MCF 10A (cell line): ENCODE measurements at regions of chr5 and their contacts with region 1.

Region 1: DNA sequence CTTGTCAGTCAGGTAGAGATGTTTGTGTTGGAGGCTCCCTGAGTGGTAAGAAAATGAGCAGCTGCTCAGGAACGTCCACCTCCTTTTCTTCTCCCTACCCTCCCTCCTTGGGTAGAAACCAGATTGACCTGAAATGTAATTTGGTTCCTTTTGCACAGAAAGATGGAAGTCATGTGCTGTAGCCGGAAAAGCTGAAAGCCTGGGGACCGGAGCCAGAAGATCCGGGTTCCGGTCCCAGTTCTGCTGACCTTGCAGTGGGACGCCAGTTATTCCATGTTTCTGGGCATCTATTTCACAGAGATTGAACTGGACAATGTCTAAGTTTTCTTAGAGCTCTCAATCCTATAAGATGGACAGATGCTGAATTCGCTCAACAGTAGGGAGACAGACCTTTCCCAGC is 40.1 kb downstream of the SLC36A1 start:
- DNase-seq: no peak
- H3K4me3 Mint-ChIP-seq: no peak overlapping the region
- H3K27ac Mint-ChIP-seq: peak overlapping the region; percentile 6
- H3K4me1 Mint-ChIP-seq: no peaks in the 10 kb centered on the region
- H3K27me3 Mint-ChIP-seq: no peaks in the 10 kb centered on the region
- CTCF ChIP-seq: no peak

Region 2: DNA sequence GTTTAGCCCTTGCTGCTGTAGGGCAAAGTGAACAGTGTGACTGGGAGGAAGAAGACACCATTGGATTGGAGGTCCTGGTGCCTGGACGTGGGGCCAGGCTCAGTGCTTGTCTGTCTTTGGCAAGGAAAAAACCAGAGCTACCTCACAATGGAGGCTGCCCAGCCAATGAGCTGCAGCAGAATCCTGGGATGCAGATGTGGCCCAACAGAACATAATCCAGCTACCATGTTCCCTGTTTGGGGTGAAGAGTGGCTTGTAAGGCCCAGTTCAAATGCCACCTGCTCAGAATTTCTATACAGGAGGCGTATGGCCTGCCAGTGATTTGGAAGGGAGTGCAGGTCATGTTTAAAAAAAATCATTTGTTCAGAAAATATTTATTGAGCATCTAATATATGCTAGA is 183.9 kb before region 1 on chr5 and contains the start of gene SLC36A3:
- CTCF ChIA-PET with region 1: no interaction called
- POLR2A ChIA-PET with region 1: no interaction called
- intact Hi-C with region 1: no loop called
- DNase-seq: no peak
- H3K4me3 Mint-ChIP-seq: no peak within 1 kb of the TSS
- H3K27ac Mint-ChIP-seq: no peak within 1 kb of the TSS
- H3K4me1 Mint-ChIP-seq: peaks cover 1% of the 10 kb centered on the region
- H3K27me3 Mint-ChIP-seq: peaks cover 89% of the 10 kb centered on the region
- CTCF ChIP-seq: no peak
- total RNA-seq, gene SLC36A3: not detected in 2 replicates

Region 3: DNA sequence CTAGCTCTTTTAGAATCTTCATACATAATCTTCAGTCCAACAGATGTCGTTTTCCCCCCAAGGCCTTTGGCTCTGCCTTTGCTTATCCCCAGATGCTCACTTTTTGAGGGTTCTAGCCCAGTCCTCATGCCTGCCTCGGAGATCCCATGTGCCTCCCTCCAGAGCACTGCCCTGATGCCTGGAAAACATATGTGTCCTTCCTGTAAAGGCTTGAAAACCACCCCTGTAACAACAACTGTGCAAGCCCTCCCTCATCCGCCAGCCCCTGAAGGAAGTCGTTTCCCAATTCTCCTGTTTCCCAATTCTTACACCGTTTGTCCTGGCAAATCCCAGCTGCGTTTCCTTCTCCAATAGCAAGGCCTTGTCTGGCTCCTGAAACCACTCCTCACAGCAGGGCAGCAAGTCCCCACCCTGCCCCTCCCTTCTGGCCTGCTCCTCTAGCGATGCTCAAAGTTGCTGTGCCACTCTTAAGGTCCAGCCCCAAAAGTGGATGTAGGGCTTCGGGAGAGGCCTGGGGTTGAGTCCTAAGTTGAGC is 12.0 kb after region 1 on chr5:
- CTCF ChIA-PET with region 1: interaction called, 10 read pairs
- POLR2A ChIA-PET with region 1: interaction called, 4 read pairs
- intact Hi-C with region 1: no loop called
- DNase-seq: peak; percentile 46
- H3K4me3 Mint-ChIP-seq: no peak overlapping the region
- H3K27ac Mint-ChIP-seq: no peak overlapping the region
- H3K4me1 Mint-ChIP-seq: no peaks in the 10 kb centered on the region
- H3K27me3 Mint-ChIP-seq: no peaks in the 10 kb centered on the region
- CTCF ChIP-seq: no peak

Region 4: DNA sequence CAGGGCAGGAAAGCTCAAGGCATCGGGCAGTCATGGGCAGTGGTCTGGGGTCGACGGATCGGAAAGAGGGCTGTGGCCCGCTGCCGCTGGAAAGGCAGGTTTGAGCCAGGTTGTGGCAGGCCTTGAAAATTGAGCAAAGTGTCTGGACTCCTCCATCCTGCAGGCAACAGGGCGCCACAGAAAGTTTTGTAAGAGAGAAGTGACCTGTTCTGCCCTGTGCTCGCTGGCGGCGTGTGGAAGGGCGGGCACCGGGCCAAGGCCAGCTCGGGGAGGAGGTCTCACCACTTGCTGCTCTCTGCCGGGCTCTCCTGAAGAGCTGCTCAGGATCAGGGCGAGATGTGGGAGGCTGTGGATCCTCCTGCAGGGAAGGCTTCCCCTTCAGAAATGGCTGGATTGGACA is 145.0 kb after region 1 on chr5:
- CTCF ChIA-PET with region 1: no interaction called
- POLR2A ChIA-PET with region 1: no interaction called
- intact Hi-C with region 1: no loop called
- DNase-seq: peak; percentile 94
- H3K4me3 Mint-ChIP-seq: peak overlapping the region; percentile 21
- H3K27ac Mint-ChIP-seq: peak overlapping the region; percentile 85
- H3K4me1 Mint-ChIP-seq: peaks cover 56% of the 10 kb centered on the region
- H3K27me3 Mint-ChIP-seq: no peaks in the 10 kb centered on the region
- CTCF ChIP-seq: no peak